GM12878 (cell line): ENCODE measurements at regions of chr1 and their contacts with region 1.

Region 1: DNA sequence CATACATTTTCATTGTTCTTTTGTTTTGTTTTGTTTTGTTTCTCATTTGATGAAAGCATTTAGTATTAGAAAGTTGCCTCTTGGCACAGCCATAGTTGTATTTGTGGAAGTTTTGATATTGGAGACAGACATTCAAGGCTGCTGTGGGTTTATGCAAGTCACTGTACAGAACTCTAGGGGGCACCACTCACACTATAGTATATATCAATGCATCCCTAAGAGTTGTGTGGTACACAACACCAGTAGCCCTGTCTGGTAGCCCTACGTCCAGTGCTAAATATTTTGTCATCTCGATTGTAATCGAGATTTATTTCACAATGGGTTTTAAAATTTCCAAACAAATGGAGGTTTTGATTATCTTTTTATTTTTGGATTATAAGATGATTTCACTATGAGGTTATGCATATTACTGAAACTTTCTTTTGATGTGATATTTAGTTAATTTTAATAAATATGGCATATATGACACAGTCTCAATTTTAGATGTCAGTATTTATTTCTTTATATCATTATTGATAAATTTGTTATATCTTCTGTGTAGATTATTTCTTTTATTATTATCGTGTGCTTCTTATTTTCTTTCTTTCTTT is 112.2 kb downstream of the NR5A2 start:
- DNase-seq: no peak
- ATAC-seq: peak; percentile 99
- H3K4me3 ChIP-seq: no peak overlapping the region
- H3K27ac ChIP-seq: no peak overlapping the region
- H3K4me1 ChIP-seq: no peaks in the 10 kb centered on the region
- H3K27me3 ChIP-seq: no peaks in the 10 kb centered on the region
- CTCF ChIP-seq: peak; percentile 70 to 75 (median 73)
- EP300 ChIP-seq: no peak
- POLR2A ChIP-seq: no peak
- RAD21 ChIP-seq: peak; percentile 82

Region 2: GRCh38 chr1:199684686-199685273 is 455.0 kb before region 1 on chr1:
- CTCF ChIA-PET with region 1: interaction called, 4 read pairs
- POLR2A ChIA-PET with region 1: no interaction called
- RAD21 ChIA-PET with region 1: no interaction called
- SMC1A ChIA-PET with region 1: no interaction called
- in situ Hi-C with region 1: no loop called
- intact Hi-C with region 1: loop called (anchors 10 kb)
- DNase-seq: peak; percentile 8
- ATAC-seq: peak; percentile 92
- H3K4me3 ChIP-seq: no peak overlapping the region
- H3K27ac ChIP-seq: no peak overlapping the region
- H3K4me1 ChIP-seq: no peaks in the 10 kb centered on the region
- H3K27me3 ChIP-seq: peaks cover 0 to 4% of the 10 kb centered on the region in 2 experiments; a peak in 2 of 4 replicates
- CTCF ChIP-seq: peak; percentile 73 to 75 (median 74)
- EP300 ChIP-seq: no peak
- POLR2A ChIP-seq: no peak
- RAD21 ChIP-seq: peak; percentile 87

Region 3: DNA sequence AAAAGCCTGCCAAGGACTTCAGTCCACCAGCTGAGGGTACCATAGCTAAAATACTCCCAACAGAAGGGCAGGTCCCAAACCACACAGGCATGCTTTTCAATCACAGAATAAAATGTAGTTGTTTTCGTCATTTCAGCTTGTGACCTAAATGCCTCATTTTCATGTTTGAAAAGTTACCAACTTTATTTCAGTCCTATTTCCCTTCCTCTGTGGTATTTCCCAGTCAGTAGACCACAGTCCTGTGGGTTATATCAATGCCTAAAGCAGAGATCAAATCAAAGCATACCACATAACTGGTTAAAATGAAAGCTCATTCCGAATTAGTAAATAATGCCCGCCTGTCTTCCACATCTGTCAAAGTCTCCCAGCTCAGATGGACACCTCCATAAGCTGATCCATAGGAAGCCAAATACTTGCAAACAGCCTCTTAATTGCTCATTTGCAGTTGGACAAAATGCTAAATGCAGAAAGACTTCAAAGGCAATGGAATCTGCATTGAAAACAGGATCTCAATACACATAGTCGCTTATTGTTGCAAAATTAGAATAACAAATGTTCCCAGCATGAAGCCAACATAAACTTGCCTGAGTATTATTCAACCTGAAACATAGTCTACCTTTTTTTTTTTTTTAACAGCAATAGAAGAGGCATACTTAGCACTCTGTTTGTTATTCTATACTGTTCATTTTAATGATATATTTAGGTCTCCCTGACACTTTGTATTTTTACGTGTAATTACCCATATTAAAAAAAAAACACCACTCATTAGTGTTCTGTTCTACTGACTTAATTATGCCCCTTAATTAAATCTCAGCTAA is 58.4 kb before region 1 on chr1:
- CTCF ChIA-PET with region 1: no interaction called
- POLR2A ChIA-PET with region 1: no interaction called
- RAD21 ChIA-PET with region 1: no interaction called
- SMC1A ChIA-PET with region 1: no interaction called
- in situ Hi-C with region 1: no loop called
- intact Hi-C with region 1: no loop called
- DNase-seq: no peak
- ATAC-seq: no peak
- H3K4me3 ChIP-seq: no peak overlapping the region
- H3K27ac ChIP-seq: no peak overlapping the region
- H3K4me1 ChIP-seq: no peaks in the 10 kb centered on the region
- H3K27me3 ChIP-seq: peaks cover 2 to 6% of the 10 kb centered on the region in 2 experiments; a peak in 2 of 4 replicates
- CTCF ChIP-seq: no peak
- EP300 ChIP-seq: no peak
- POLR2A ChIP-seq: no peak
- RAD21 ChIP-seq: no peak

Region 4: GRCh38 chr1:200154069-200154767 is 14.5 kb after region 1 on chr1:
- CTCF ChIA-PET with region 1: interaction called, 19 read pairs
- POLR2A ChIA-PET with region 1: interaction called, 8 read pairs
- RAD21 ChIA-PET with region 1: interaction called, 8 read pairs
- SMC1A ChIA-PET with region 1: interaction called, 26 read pairs
- in situ Hi-C with region 1: no loop called
- intact Hi-C with region 1: no loop called
- DNase-seq: peak; percentile 88
- ATAC-seq: peak; percentile 89
- H3K4me3 ChIP-seq: no peak overlapping the region
- H3K27ac ChIP-seq: peak overlapping the region; percentile 77
- H3K4me1 ChIP-seq: peaks cover 41% of the 10 kb centered on the region
- H3K27me3 ChIP-seq: no peaks in the 10 kb centered on the region
- CTCF ChIP-seq: no peak
- EP300 ChIP-seq: peak; percentile 83 to 86
- POLR2A ChIP-seq: no peak
- RAD21 ChIP-seq: 0 out of 2 replicates have a peak, but pooled peaks have one; percentile 13

Region 5: GRCh38 chr1:200279810-200280411 is 140.2 kb after region 1 on chr1:
- CTCF ChIA-PET with region 1: interaction called, 39 read pairs
- POLR2A ChIA-PET with region 1: no interaction called
- RAD21 ChIA-PET with region 1: interaction called, 42 read pairs
- SMC1A ChIA-PET with region 1: interaction called, 49 read pairs
- in situ Hi-C with region 1: no loop called
- intact Hi-C with region 1: loop called (anchors 5 kb)
- DNase-seq: no peak
- ATAC-seq: peak; percentile 58
- H3K4me3 ChIP-seq: no peak overlapping the region
- H3K27ac ChIP-seq: no peak overlapping the region
- H3K4me1 ChIP-seq: 0 out of 2 replicates have a peak, but pooled peaks cover 5% of the 10 kb centered on the region
- H3K27me3 ChIP-seq: no peaks in the 10 kb centered on the region; a peak in 1 of 4 replicates
- CTCF ChIP-seq: peak; percentile 66 to 72 (median 71)
- EP300 ChIP-seq: no peak
- POLR2A ChIP-seq: no peak
- RAD21 ChIP-seq: peak; percentile 83

Region 6: DNA sequence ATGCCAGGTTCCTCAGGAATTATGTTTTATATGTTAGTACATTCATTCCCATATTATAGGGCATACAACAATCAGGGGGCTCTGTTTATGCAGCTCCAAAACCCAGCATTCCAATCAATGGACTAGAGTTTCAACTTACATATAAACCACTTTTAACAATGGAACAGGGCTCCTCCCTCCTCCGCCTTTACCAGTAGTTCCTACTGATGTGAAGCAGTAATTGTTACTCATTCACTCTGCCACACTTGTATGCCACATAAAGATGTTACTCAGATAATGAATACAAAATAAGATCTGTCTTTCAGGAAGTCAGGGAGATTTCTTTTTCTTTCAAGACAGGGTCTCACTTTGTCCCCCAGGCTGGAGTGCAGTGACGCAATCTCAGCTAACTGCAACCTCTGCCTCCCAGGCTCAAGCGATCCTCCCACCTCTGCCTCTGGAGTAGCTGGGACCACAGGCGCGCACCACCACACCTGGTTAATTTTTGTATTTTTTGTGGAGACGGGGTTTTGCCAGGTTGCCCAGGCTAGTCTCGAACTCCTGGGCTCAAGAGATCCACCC is 252.9 kb after region 1 on chr1:
- CTCF ChIA-PET with region 1: no interaction called
- POLR2A ChIA-PET with region 1: no interaction called
- RAD21 ChIA-PET with region 1: no interaction called
- SMC1A ChIA-PET with region 1: no interaction called
- in situ Hi-C with region 1: no loop called
- intact Hi-C with region 1: no loop called
- DNase-seq: no peak
- ATAC-seq: no peak
- H3K4me3 ChIP-seq: no peak overlapping the region
- H3K27ac ChIP-seq: no peak overlapping the region
- H3K4me1 ChIP-seq: no peaks in the 10 kb centered on the region
- H3K27me3 ChIP-seq: no peaks in the 10 kb centered on the region
- CTCF ChIP-seq: no peak
- EP300 ChIP-seq: no peak
- POLR2A ChIP-seq: no peak
- RAD21 ChIP-seq: no peak

Region 7: DNA sequence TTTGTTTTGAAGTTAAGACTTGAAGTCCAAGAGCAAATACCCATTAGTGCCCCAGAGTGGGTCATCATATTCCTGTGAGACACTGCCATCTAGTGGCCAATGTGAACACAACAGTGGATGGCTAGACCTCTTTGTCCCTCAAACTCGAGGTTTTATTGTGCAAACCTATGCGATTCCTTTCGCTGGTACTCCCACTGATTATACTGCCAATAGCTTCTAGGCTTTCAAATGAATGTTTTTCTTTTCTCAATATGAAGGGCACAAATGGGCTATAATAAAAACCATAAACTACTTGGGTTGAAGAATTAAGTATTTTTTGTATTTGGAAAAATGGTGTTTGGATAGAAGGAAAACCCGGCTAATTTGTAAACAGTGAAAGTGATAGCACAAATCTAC is 370.5 kb after region 1 on chr1:
- CTCF ChIA-PET with region 1: interaction called, 4 read pairs
- POLR2A ChIA-PET with region 1: no interaction called
- RAD21 ChIA-PET with region 1: no interaction called
- SMC1A ChIA-PET with region 1: no interaction called
- in situ Hi-C with region 1: no loop called
- intact Hi-C with region 1: loop called (anchors 1 kb)
- DNase-seq: peak; percentile 39
- ATAC-seq: peak; percentile 99
- H3K4me3 ChIP-seq: no peak overlapping the region
- H3K27ac ChIP-seq: no peak overlapping the region
- H3K4me1 ChIP-seq: no peaks in the 10 kb centered on the region
- H3K27me3 ChIP-seq: no peaks in the 10 kb centered on the region; a peak in 2 of 4 replicates
- CTCF ChIP-seq: peak; percentile 75 to 95 (median 83)
- EP300 ChIP-seq: no peak
- POLR2A ChIP-seq: no peak
- RAD21 ChIP-seq: peak; percentile 97